Activated CD4-positive, alpha-beta memory T cell treated with anti-CD3 and anti-CD28 coated beads for 36 hours (primary cell): ENCODE measurements at regions of chr12 and their contacts with region 1.

Region 1: GRCh38 chr12:6470375-6471163 is at the start of gene VAMP1:
- DNase-seq: peak; percentile 99
- H3K4me3 Mint-ChIP-seq: peak within 1 kb of the TSS; percentile 88
- H3K27ac Mint-ChIP-seq: peak within 1 kb of the TSS; percentile 89
- H3K4me1 Mint-ChIP-seq: peaks cover 51% of the 10 kb centered on the region
- H3K27me3 Mint-ChIP-seq: no peaks in the 10 kb centered on the region
- total RNA-seq, gene VAMP1: 27.7 to 30.2 TPM

Region 2: DNA sequence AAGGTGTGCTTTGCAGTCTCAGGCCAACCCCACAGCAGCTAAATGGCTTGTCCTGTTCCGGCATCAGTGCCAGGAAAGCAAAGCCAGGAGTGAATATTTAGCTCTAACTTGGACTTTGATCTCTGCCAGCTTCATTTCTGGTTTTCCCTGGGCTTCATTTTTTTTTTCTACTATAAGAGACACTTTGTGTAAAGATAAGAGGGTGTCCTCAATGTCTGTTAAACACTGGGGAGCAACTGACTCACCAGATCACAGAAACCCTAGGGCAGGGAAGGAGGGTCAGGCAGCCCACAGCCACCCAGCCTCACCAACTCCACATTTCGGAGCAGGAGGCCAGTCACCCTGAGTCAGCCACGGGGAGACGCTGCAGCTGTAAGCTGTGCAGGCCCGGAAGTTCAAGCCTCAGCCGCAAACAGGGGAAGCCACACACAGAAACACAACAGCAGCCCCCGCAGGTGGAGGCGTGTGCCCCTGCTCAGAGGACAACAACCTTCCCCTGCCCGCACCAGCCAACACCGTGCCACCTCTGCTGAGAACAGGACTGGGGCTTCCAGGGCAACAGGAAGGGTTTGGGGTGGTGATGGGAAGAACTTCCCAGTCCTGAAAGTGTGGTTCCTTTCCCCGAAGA is 135.0 kb before region 1 on chr12:
- CTCF ChIA-PET with region 1: interaction called, 43 read pairs
- POLR2A ChIA-PET with region 1: interaction called, 20 read pairs
- intact Hi-C with region 1: no loop called
- DNase-seq: peak; percentile 94
- H3K4me3 Mint-ChIP-seq: no peak overlapping the region
- H3K27ac Mint-ChIP-seq: no peak overlapping the region
- H3K4me1 Mint-ChIP-seq: peaks cover 20% of the 10 kb centered on the region
- H3K27me3 Mint-ChIP-seq: no peaks in the 10 kb centered on the region

Region 3: DNA sequence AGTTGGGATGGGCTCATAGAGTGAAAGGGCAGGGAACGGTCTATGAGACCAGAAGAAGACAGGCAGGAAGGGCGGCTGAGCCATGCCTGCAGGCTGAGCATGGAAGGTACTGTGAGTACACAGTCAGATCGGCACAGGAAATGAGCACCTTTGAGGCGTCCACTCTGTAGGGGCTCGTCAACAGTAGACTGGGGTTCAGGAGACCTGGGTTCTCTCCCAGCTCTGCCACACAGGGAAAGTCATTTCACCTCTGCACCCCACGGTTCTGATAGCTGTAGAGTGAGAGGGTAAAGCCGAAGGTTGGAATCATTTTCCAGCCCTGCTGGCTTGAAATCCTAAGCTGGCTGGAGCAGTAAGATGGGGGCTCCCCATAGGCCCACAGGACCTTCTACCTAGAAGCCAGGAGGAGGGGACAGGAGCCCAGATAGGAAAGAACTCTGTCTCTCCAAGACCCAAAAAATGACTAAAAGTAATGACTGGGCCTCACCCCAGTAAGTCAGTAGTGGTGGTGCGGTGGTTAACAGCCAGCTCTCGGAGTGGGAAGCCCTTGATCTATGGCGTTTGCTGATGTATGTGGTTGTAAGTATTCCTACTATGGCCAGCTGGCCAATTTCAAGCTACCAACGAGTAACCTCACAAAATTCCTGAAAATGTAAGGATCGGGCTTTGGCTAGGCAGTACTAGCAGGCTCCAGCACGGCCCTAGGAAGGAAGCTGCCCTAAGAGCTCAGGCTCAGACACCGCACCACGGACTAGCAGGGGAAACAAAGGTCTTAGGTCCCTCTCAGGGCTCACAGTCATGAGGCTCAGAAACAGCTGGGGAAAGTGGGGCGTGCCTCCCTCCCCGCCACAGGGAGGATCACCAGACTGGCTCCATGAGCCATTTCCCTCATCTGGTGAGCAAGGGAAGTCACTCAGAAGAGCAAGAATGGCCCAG is 36.1 kb before region 1 on chr12:
- CTCF ChIA-PET with region 1: interaction called, 16 read pairs
- POLR2A ChIA-PET with region 1: interaction called, 14 read pairs
- intact Hi-C with region 1: no loop called
- DNase-seq: peak; percentile 67
- H3K4me3 Mint-ChIP-seq: no peak overlapping the region
- H3K27ac Mint-ChIP-seq: peak overlapping the region; percentile 84
- H3K4me1 Mint-ChIP-seq: peaks cover 62% of the 10 kb centered on the region
- H3K27me3 Mint-ChIP-seq: no peaks in the 10 kb centered on the region

Region 4: GRCh38 chr12:6451348-6452244 is 19.0 kb before region 1 on chr12 and contains the start of gene TAPBPL:
- CTCF ChIA-PET with region 1: interaction called, 50 read pairs
- POLR2A ChIA-PET with region 1: interaction called, 32 read pairs
- intact Hi-C with region 1: no loop called
- DNase-seq: peak; percentile 90
- H3K4me3 Mint-ChIP-seq: peak within 1 kb of the TSS; percentile 99
- H3K27ac Mint-ChIP-seq: peak within 1 kb of the TSS; percentile 100
- H3K4me1 Mint-ChIP-seq: peaks cover 62% of the 10 kb centered on the region
- H3K27me3 Mint-ChIP-seq: no peaks in the 10 kb centered on the region
- total RNA-seq, gene TAPBPL: 33.4 to 35.0 TPM

Region 5: DNA sequence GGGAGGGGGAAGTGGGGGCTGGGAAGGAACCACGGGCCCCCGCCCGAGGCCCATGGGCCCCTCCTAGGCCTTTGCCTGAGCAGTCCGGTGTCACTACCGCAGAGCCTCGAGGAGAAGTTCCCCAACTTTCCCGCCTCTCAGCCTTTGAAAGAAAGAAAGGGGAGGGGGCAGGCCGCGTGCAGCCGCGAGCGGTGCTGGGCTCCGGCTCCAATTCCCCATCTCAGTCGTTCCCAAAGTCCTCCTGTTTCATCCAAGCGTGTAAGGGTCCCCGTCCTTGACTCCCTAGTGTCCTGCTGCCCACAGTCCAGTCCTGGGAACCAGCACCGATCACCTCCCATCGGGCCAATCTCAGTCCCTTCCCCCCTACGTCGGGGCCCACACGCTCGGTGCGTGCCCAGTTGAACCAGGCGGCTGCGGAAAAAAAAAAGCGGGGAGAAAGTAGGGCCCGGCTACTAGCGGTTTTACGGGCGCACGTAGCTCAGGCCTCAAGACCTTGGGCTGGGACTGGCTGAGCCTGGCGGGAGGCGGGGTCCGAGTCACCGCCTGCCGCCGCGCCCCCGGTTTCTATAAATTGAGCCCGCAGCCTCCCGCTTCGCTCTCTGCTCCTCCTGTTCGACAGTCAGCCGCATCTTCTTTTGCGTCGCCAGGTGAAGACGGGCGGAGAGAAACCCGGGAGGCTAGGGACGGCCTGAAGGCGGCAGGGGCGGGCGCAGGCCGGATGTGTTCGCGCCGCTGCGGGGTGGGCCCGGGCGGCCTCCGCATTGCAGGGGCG is 63.5 kb after region 1 on chr12 and contains the start of gene GAPDH:
- CTCF ChIA-PET with region 1: interaction called, 12 read pairs
- POLR2A ChIA-PET with region 1: interaction called, 54 read pairs
- intact Hi-C with region 1: loop called (anchors 1 kb)
- DNase-seq: peak; percentile 93
- H3K4me3 Mint-ChIP-seq: peak within 1 kb of the TSS; percentile 96
- H3K27ac Mint-ChIP-seq: peak within 1 kb of the TSS; percentile 100
- H3K4me1 Mint-ChIP-seq: peaks cover 44% of the 10 kb centered on the region
- H3K27me3 Mint-ChIP-seq: no peaks in the 10 kb centered on the region
- total RNA-seq, gene GAPDH: 5,823 to 5,836 TPM

Region 6: GRCh38 chr12:6607751-6608591 is 137.4 kb after region 1 on chr12:
- CTCF ChIA-PET with region 1: interaction called, 4 read pairs
- POLR2A ChIA-PET with region 1: no interaction called
- intact Hi-C with region 1: loop called (anchors 2 kb)
- DNase-seq: peak; percentile 82
- H3K4me3 Mint-ChIP-seq: no peak overlapping the region
- H3K27ac Mint-ChIP-seq: no peak overlapping the region
- H3K4me1 Mint-ChIP-seq: peaks cover 53% of the 10 kb centered on the region
- H3K27me3 Mint-ChIP-seq: no peaks in the 10 kb centered on the region